A549 (cell line): ENCODE measurements at regions of chr19 and their contacts with region 1.

Region 1: DNA sequence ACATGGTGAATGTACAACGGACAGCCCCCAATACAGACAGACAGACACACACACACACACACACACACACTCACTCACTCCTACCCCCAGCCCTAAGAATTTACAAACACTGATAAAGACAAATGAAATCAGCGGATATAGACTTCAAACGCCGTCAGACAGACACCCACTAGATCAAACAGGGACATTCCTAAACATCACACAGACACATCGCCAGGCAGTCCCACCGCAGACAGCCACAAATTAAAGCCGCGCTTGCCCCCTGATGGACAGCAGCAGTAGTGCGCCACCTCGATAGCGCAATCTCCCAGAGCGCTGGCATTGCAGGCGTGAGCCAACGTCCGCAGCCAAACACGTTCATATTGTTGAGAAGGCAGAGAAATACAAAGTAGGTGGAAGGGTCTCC is 24.7 kb upstream of the ADGRE1 start:
- DNase-seq: peak; percentile 73 to 87
- ATAC-seq: peak; percentile 93 to 98
- H3K4me3 ChIP-seq: peak overlapping the region; percentile 47
- H3K27ac ChIP-seq: peak overlapping the region; percentile 65 to 83
- H3K4me1 ChIP-seq: 0 out of 3 replicates have a peak, but pooled peaks cover 6% of the 10 kb centered on the region
- CTCF ChIP-seq: peak; percentile 71
- EP300 ChIP-seq: no peak
- POLR2A ChIP-seq: no peak
- RAD21 ChIP-seq: peak; percentile 92 to 93

Region 2: DNA sequence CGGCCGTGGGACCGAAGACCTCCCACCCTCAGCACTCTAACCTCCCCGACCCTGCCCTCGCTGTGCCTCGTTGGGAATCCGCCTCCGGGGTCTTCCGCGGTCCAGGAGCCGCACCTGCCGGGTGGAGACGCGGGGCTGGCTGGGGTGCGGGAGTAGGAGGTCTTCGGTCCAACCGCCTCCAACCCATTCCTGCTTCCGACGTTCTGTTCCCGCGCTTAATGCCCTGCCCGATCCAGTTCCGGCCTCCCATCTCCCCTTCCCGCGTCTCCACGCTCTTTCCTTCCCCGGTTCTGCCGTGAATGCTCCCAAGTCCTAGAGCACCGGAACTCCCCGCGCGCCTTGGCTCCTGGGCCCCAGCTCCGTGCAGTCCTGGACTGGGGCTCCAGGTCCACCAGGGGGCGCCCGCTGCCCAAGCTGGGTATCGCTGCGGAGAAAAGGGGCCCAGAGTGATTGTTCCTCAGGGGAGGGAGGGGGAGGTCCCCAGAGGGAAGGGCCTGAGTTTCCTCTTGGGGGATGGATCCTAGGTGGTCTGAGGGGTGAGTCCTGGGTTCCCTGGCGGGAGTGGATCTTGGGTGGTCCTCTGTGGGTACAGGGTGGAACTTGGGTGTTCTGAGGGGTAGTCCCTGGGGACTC is 345.9 kb before region 1 on chr19:
- CTCF ChIA-PET with region 1: interaction called, 33 read pairs
- POLR2A ChIA-PET with region 1: interaction called, 3 read pairs
- DNase-seq: peak; percentile 83 to 84
- ATAC-seq: peak; percentile 79 to 93
- H3K4me3 ChIP-seq: peak overlapping the region; percentile 58
- H3K27ac ChIP-seq: peak overlapping the region; percentile 51 to 93
- H3K4me1 ChIP-seq: peaks cover 46% of the 10 kb centered on the region
- CTCF ChIP-seq: peak; percentile 90
- EP300 ChIP-seq: no peak
- POLR2A ChIP-seq: no peak
- RAD21 ChIP-seq: peak; percentile 94

Region 3: DNA sequence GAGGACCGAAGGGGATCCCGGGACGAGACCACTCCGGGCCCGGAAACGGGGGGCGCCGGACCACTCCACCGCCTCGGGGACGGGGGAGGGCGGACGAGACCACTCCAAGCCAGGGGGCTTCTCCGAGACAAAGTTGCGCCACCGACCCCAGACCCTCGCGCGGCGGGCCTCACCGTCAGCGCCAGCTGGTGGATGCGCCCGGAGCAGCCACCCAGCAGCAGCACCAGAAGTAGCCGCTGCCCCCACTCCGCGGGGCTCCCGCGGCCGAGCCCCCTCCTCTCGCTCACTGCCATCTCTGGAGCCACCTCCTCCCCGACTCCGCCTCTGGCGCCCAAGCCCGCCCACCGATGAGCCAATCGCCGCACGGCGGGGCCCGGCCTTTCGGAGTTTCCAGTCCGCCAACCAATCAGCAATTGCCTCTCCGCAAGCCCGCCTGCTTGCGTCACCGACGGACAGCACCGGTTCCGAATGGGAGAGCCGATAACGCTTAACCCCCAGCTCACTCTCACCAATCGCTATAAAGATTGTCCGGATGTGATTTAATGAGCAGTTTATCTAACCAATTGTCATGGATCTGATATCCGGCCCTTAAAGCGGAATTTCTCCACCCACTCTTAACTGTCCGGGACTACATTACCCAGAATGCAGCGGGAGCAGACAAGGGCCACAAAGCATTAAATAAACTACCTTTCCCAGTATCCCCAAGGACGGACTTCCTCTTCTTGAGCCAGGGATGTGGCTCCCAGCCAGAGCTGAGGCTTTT is 125.2 kb before region 1 on chr19 and contains the start of gene GPR108:
- CTCF ChIA-PET with region 1: interaction called, 127 read pairs
- POLR2A ChIA-PET with region 1: interaction called, 4 read pairs
- DNase-seq: peak; percentile 94 to 99
- ATAC-seq: peak; percentile 62 to 79
- H3K4me3 ChIP-seq: peak within 1 kb of the TSS; percentile 93
- H3K27ac ChIP-seq: peak within 1 kb of the TSS; percentile 97 to 98
- H3K4me1 ChIP-seq: peaks cover 29% of the 10 kb centered on the region
- CTCF ChIP-seq: no peak
- EP300 ChIP-seq: no peak
- POLR2A ChIP-seq: no peak; the same call in 1 of the 2 replicates
- RAD21 ChIP-seq: no peak
- polyA plus RNA-seq, gene GPR108: 50.2 and 69.4 TPM in 2 replicates

Region 4: DNA sequence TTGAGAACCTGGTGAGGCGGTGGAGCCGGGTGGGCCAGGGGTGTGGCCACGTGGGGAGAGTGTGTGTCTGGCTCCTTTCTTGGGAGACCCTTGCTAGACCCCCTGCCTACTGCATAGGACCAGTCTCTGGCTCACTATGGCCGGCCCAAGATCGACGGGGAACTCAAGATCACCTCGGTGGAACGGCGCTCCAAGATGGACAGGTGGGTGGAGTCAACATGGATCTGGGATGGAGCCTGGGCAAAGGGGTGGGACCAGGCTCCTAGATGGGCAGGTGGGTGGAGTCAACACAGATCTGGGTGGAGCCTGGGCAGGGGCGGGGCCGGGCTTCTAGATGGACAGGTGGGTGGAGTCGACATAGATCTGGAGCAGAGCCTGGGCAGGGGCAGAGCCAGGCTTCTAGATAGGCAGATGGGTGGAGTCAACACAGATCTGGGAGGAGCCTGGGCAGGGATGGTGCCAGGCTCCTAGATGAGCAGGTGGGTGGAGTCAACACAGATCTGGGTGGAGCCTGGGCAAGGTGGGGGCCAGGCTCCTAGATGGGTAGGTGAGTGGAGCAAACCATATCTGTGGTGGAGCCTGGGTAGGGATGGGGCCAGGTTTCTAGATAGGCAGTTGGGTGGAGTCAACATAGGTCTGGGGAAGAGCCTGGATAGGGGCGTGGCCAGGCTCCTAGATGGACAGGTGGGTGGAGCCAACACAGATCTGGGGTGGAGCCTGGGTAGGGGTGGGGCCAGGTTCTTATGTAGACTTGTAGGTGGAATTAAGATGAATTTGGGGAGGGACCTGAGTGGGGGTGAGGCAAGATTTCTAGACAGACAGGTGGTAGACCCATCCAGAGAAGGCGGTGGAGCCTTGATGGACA is 33.7 kb before region 1 on chr19:
- CTCF ChIA-PET with region 1: interaction called, 11 read pairs
- POLR2A ChIA-PET with region 1: interaction called, 4 read pairs
- DNase-seq: peak; percentile 78 to 95
- ATAC-seq: peak; percentile 88 to 92
- H3K4me3 ChIP-seq: peak overlapping the region; percentile 63
- H3K27ac ChIP-seq: peak overlapping the region; percentile 83 to 87
- H3K4me1 ChIP-seq: peaks cover 7% of the 10 kb centered on the region; the same call in 2 of the 3 replicates
- CTCF ChIP-seq: no peak
- EP300 ChIP-seq: no peak
- POLR2A ChIP-seq: peak; percentile 4; the same call in 1 of the 2 replicates
- RAD21 ChIP-seq: no peak

Region 5: DNA sequence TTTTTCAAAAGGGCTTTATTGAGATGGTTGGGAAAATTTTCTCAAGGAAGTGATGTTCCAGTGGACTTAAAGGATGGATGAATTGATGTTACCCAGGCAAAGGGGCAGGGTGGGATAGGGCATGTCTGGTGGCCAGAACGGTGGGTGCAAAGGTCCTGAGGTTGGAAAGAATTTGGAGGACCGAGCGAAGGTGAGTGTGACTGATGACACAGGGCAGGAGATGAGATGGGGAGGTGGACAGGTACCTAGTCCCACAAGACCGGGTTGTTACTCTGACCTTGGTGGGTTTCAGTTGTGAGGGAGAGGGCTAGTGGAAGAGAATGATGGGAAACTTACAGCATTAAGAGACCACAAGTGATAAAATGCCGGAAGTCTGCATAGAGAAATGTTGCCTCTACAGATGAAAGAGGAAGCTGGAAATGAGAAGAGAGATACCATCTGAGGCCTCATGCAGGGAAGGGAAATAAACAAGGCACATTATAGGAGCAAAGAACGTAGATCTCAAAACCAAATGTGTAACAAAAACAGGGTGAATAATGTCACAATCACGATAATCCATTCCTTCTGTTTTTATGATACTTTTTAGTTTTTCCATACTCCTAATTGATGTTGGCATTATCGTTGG is 29.2 kb after region 1 on chr19:
- CTCF ChIA-PET with region 1: interaction called, 10 read pairs
- POLR2A ChIA-PET with region 1: no interaction called
- DNase-seq: no peak
- ATAC-seq: no peak
- H3K4me3 ChIP-seq: no peak overlapping the region
- H3K27ac ChIP-seq: no peak overlapping the region
- H3K4me1 ChIP-seq: no peaks in the 10 kb centered on the region
- CTCF ChIP-seq: no peak
- EP300 ChIP-seq: no peak
- POLR2A ChIP-seq: no peak
- RAD21 ChIP-seq: no peak